Heart left ventricle (tissue), 16 donors: ENCODE measurements at regions of chr3 and their contacts with region 1.

Region 1: GRCh38 chr3:68458581-68458980 is 473.8 kb downstream of the TAFA4 start:
- DNase-seq: no peak
- ATAC-seq: no peak
- H3K4me3 ChIP-seq: no peak overlapping the region
- H3K27ac ChIP-seq: no peak overlapping the region
- H3K4me1 ChIP-seq: no peaks in the 10 kb centered on the region
- H3K27me3 ChIP-seq: peaks cover 0 to 6% (median 0%) of the 10 kb centered on the region in 9 donors
- CTCF ChIP-seq: no peak
- POLR2A ChIP-seq: no peak

Region 2: DNA sequence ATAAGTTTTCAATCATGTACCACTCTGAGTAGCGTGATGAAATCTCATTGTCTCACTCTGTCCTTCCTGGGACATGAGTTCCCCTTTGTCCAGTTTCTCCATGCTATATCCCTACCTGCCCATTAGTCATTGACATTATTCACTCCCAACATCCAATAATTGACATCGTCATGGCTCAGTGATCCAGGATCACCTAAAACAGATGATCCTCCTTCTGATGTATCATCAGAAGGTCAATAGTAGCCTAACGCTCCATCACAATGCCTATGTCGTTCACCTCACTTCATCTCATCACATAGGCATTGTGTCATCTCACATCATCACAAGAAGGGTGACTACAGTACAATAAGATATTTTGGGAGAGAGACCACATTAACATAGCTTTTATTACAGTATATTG is 132.8 kb after region 1 on chr3:
- intact Hi-C with region 1: loop called in 1 of 10 experiments (anchors 10 kb)
- DNase-seq: no peak
- ATAC-seq: no peak
- H3K4me3 ChIP-seq: no peak overlapping the region
- H3K27ac ChIP-seq: no peak overlapping the region
- H3K4me1 ChIP-seq: no peaks in the 10 kb centered on the region
- H3K27me3 ChIP-seq: no peaks in the 10 kb centered on the region
- CTCF ChIP-seq: no peak
- POLR2A ChIP-seq: no peak